ENCODE measurements at regions of chr4 and their contacts with region 1.

Region 1: DNA sequence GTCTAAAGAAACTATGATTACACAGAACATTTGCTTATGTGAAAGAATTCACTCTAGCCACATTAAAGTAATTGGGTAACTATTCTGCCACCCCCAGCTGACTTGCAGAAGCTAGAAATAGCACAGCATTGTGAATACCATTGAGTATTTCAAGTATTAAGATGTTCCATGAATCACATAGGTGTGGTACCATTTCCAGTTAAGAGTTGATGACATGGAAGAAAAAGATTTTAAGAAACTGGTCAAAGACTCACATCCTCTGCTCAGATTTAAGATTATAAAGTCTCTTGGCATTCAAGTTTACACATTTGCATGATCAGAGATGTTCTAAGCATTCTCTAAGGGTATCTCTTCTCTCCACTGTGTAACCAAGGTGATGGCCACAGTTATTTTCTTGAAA is 287.5 kb downstream of the CAMK2D start:
- DNase-seq: peak; percentile 55
- H3K4me3 Mint-ChIP-seq: no peak overlapping the region
- H3K27ac Mint-ChIP-seq: peak overlapping the region; percentile 84
- H3K4me1 Mint-ChIP-seq: peaks cover 56% of the 10 kb centered on the region
- H3K27me3 Mint-ChIP-seq: no peaks in the 10 kb centered on the region

Region 2: DNA sequence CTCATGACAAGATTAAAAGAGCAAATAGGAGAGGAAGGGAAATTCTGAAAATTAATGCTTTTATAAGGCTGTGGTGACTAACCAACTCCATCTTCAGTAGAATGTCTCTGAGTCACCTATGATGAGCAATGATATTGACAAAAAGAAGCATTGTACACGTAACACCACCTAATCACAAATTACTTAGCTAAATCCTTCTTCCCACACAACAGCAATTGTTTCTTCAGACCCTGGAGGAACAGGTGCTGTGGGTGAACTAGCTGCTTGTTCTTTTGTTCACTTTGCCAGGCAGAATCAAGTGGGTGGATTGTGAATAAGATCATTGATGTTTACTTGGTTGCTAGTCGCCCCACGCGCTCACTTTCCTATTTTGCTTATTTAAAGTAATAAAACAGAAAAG is 28.0 kb before region 1 on chr4:
- CTCF ChIA-PET with region 1: interaction called, 3 read pairs
- intact Hi-C with region 1: loop called (anchors 1 kb)
- DNase-seq: no peak
- H3K4me3 Mint-ChIP-seq: no peak overlapping the region
- H3K27ac Mint-ChIP-seq: peak overlapping the region; percentile 66
- H3K4me1 Mint-ChIP-seq: peaks cover 27% of the 10 kb centered on the region
- H3K27me3 Mint-ChIP-seq: no peaks in the 10 kb centered on the region

Region 3: GRCh38 chr4:113539408-113539807 is 65.4 kb after region 1 on chr4:
- CTCF ChIA-PET with region 1: no interaction called
- intact Hi-C with region 1: loop called (anchors 1 kb)
- DNase-seq: peak; percentile 39
- H3K4me3 Mint-ChIP-seq: no peak overlapping the region
- H3K27ac Mint-ChIP-seq: peak overlapping the region; percentile 67
- H3K4me1 Mint-ChIP-seq: peaks cover 33% of the 10 kb centered on the region
- H3K27me3 Mint-ChIP-seq: no peaks in the 10 kb centered on the region

Region 4: DNA sequence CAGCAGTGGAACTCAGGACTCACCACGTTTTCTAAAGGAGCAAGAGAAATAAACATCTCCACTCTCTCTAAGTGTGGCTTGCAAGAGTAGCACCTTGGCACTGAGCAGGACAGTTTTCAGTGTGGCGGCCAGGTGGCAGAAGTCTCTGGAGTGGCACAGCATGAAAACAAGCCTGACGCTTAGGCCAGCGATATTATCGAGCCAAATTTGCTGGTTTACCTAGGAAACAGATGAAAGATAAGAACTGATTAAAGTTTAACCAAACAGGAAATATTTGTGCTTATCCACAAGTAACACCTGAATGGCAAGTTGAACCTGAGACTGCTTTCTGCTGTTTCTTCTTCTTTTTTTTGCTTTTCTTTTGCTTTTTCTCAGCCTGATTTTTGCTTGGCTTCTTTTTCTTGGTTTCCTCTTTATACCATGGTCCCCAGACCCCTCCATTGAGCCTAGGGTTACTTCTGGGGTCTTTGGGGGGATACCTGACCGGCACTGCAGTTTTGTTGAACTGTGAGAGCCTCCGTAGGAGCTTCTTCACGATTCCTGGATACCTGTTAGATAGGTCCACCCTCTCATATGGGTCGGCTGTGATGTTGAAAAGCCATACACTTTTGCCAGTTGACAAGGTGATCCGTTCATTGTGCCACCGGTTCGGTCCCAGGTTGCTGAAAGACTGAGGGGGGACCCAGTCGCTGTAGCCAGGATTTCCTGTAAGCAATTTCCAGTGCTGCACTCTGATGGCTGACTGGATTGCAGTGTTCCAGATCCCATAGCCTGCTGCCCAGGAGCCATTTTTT is 428.2 kb after region 1 on chr4:
- CTCF ChIA-PET with region 1: no interaction called
- intact Hi-C with region 1: loop called (anchors 5 kb)
- DNase-seq: peak; percentile 82
- H3K4me3 Mint-ChIP-seq: peak overlapping the region; percentile 65
- H3K27ac Mint-ChIP-seq: peak overlapping the region; percentile 82
- H3K4me1 Mint-ChIP-seq: peaks cover 58% of the 10 kb centered on the region
- H3K27me3 Mint-ChIP-seq: no peaks in the 10 kb centered on the region

Measured in activated naive CD4-positive, alpha-beta T cell treated with anti-CD3 and anti-CD28 coated beads for 36 hours (primary cell).